BJ (cell line): ENCODE measurements at regions of chr3 and their contacts with region 1.

Region 1: GRCh38 chr3:46488735-46489361 is 8.9 kb upstream of the RTP3 start:
- DNase-seq: no peak
- H3K4me3 ChIP-seq: no peak overlapping the region
- H3K27me3 ChIP-seq: no peaks in the 10 kb centered on the region; the same call in 1 of the 2 replicates
- CTCF ChIP-seq: peak; percentile 100

Region 2: GRCh38 chr3:46284981-46285683 is 203.7 kb before region 1 on chr3:
- CTCF ChIA-PET with region 1: no interaction called
- POLR2A ChIA-PET with region 1: no interaction called
- DNase-seq: no peak
- H3K4me3 ChIP-seq: no peak overlapping the region
- H3K27me3 ChIP-seq: no peaks in the 10 kb centered on the region
- CTCF ChIP-seq: no peak

Region 3: GRCh38 chr3:46334741-46335478 is 153.9 kb before region 1 on chr3:
- CTCF ChIA-PET with region 1: no interaction called
- POLR2A ChIA-PET with region 1: no interaction called
- DNase-seq: peak; percentile 4
- H3K4me3 ChIP-seq: no peak overlapping the region
- H3K27me3 ChIP-seq: peaks cover 5% of the 10 kb centered on the region
- CTCF ChIP-seq: no peak

Region 4: DNA sequence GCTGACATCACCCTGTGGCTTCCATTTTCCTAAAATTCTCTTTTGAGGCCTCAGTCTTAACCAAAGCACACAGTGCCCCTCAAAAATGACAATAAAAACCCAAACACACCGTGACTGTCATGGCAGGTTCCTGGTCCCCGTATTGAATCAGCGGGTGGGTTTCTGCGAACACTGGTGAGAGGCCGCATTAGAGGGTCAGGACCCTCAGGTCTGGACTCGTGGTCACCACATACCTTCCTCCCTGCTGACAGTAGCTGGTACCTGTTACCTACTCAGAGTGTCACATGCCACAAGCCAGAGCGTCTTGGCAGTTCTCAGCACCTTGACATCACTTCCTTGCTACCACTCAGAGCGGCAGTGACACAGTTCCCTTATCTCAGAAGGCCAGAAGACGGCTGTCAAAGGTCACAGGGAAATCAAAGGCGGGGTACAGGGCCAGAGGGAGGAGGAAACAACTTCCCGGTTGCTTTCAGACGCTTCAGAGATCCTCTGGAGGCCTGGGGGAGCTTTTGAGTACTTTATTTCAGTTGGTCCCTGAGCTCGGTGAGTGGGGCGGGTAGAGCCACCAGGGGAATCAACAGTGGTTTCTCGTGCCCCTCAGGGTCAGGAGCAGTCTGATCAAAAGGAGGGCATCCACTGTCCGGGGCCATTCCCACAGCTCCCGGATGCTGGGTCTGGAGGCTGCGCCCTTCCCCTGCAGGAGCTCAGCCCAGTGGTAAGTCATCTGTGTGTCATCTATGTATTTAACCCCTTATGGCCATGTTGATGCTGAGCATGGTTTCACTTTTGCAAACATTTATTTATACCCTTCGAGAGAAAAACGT is 81.8 kb before region 1 on chr3 and contains the starts of genes CCR5AS and CCRL2:
- CTCF ChIA-PET with region 1: no interaction called
- POLR2A ChIA-PET with region 1: no interaction called
- DNase-seq: no peak
- H3K4me3 ChIP-seq: no peak within 1 kb of the TSS
- H3K27me3 ChIP-seq: no peaks in the 10 kb centered on the region; the same call in 1 of the 2 replicates
- CTCF ChIP-seq: no peak
- polyA plus RNA-seq, gene CCRL2: not detected in 2 replicates

Region 5: GRCh38 chr3:46538803-46539442 is 50.1 kb after region 1 on chr3:
- CTCF ChIA-PET with region 1: interaction called, 25 read pairs
- POLR2A ChIA-PET with region 1: no interaction called
- DNase-seq: no peak
- H3K4me3 ChIP-seq: no peak overlapping the region
- H3K27me3 ChIP-seq: no peaks in the 10 kb centered on the region
- CTCF ChIP-seq: no peak

Region 6: DNA sequence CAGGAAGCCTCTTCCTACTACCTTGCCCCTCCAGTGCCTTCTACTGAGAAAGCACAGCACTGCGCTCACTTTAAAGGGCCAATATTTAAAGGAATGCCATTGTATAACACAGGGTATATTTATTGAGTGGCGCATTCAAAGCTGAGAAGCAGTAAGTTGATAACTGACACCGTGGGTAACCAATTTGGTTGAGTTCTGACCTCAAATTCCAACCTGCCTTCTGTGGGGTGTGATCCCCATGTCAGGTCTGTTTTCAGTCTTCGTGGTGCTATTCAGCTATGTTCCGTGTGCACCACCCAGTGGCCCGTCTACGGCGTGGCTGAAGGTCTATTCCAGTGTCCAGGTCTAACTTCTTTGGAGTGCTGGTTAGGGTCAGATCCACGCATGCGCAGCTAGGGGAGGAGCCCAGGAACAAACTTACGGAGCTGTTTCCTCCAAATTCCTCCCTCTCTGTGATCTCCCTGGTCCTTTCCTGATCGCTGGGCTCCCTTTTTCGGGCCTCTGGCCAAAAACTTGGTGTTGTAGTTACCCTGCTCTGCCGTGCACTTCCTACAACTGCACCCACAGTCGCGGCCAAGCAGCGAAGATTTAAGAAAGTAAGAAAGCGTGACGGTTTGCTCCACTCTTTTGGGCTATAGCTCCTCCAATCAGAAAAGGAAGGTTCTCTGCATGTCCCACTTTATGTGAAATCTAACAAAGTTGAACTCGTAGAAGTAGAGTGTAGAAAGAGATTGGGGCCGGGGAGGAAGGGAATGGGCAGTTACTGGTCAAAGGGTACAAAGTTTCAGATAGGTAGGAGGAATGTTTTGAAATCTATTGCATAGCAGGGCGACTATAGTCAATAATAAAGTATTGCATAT is 69.6 kb after region 1 on chr3:
- CTCF ChIA-PET with region 1: interaction called, 182 read pairs
- POLR2A ChIA-PET with region 1: no interaction called
- DNase-seq: peak; percentile 67
- H3K4me3 ChIP-seq: peak overlapping the region; percentile 39
- H3K27me3 ChIP-seq: no peaks in the 10 kb centered on the region
- CTCF ChIP-seq: peak; percentile 88

Region 7: GRCh38 chr3:46585799-46586693 is 97.2 kb after region 1 on chr3:
- CTCF ChIA-PET with region 1: interaction called, 11 read pairs
- POLR2A ChIA-PET with region 1: no interaction called
- DNase-seq: no peak
- H3K4me3 ChIP-seq: no peak overlapping the region
- H3K27me3 ChIP-seq: peaks cover 10% of the 10 kb centered on the region
- CTCF ChIP-seq: no peak

Region 8: GRCh38 chr3:46663591-46664135 is 174.8 kb after region 1 on chr3:
- CTCF ChIA-PET with region 1: interaction called, 24 read pairs
- POLR2A ChIA-PET with region 1: no interaction called
- DNase-seq: no peak
- H3K4me3 ChIP-seq: no peak overlapping the region
- H3K27me3 ChIP-seq: peaks cover 1% of the 10 kb centered on the region; the same call in 1 of the 2 replicates
- CTCF ChIP-seq: 0 out of 2 replicates have a peak, but pooled peaks have one; percentile 8

Region 9: GRCh38 chr3:47056705-47057104 is 567.9 kb after region 1 on chr3:
- CTCF ChIA-PET with region 1: no interaction called
- POLR2A ChIA-PET with region 1: no interaction called
- DNase-seq: no peak
- H3K4me3 ChIP-seq: no peak overlapping the region
- H3K27me3 ChIP-seq: no peaks in the 10 kb centered on the region
- CTCF ChIP-seq: no peak